ENCODE measurements at regions of chr9 and their contacts with region 1.

Region 1: GRCh38 chr9:87862536-87863268 is 20.0 kb upstream of the SPATA31E1 start:
- DNase-seq: no peak
- ATAC-seq: no peak
- H3K4me3 ChIP-seq: no peak overlapping the region
- H3K27ac ChIP-seq: no peak overlapping the region
- H3K4me1 ChIP-seq: no peaks in the 10 kb centered on the region
- H3K27me3 ChIP-seq: no peaks in the 10 kb centered on the region
- CTCF ChIP-seq: no peak

Region 2: DNA sequence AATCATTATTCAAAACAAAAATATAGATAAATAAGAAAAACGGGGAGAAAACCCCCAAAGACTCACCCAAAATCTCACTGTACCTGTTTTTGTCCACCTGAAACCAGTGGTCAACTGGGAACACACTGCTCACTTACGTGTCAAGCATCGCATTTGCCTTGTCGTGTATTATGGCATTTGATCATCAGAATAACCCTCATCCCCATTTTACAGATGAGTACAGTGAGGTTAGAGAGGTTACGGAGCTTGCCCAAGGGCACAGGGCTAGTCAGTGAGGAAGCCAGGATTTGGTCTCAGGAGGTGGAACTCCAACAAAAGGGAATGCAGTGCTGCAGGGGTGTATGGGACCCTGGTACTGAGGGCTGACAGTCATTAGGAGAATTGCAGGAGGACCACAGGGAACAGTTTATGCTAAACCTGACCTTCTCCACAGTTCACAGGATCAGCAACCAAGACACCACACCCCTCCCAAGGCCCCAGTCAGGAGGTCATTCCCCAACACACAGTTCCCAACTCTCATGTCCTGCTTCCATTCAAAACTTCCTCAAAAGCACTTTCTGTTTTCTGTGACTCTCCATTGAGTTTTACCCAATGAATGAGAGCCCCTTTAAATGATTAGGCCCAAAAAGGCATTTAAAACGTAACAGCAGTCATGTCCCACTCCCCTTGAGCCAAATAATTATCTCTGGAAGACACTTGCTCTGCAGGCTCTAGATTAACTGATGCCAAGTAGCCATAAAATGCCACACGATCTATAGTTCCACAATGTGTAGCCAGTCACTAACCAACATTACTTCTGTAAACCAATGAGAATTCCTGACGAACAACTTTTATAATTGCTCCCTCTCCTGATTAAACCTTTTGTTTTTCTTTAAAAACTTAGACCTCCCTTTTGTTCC is 86.0 kb before region 1 on chr9:
- intact Hi-C with region 1: loop called in 1 of 2 experiments (anchors 5 kb)
- DNase-seq: no peak
- ATAC-seq: no peak
- H3K4me3 ChIP-seq: no peak overlapping the region
- H3K27ac ChIP-seq: no peak overlapping the region
- H3K4me1 ChIP-seq: no peaks in the 10 kb centered on the region
- H3K27me3 ChIP-seq: no peaks in the 10 kb centered on the region
- CTCF ChIP-seq: no peak

Region 3: GRCh38 chr9:87798261-87798833 is 64.4 kb before region 1 on chr9:
- intact Hi-C with region 1: no loop called
- DNase-seq: no peak
- ATAC-seq: no peak
- H3K4me3 ChIP-seq: no peak overlapping the region
- H3K27ac ChIP-seq: no peak overlapping the region
- H3K4me1 ChIP-seq: no peaks in the 10 kb centered on the region
- H3K27me3 ChIP-seq: peaks cover 0 to 1% (median 0%) of the 10 kb centered on the region in 3 donors
- CTCF ChIP-seq: no peak

Region 4: DNA sequence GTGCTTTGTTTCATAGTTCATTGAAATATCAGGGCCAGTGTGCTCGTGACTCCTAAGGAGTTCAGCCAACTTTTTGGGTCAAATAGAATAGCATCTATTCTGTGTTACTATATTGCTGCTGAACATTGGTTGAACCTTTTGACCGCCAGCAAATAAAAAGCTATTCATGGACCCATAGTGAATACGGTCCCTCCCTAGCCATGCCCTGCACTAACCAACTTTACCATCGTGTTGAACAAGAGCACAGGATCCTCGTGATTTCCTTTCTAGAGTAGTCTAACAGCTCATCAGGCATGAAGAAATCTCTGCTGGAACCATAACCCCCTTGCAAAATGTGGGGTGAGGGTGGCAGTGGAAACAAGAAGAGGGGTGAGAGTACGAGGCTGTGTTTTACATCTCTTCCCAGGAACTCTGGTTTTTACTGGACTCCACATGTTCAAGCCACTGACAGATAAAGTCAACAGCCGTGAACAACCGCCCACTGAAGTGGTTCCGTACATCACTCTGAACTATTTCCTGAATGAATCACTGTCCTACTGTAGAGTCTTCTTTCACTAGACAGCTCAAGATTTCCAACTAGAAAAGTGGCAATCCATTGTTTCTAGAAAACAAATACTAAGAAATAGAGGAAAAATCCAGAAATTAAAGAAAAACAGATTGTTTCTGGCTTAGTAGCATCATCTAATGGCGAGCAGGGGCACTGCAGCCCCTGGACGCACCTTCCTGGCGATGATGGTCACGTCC is 50.2 kb before region 1 on chr9:
- intact Hi-C with region 1: no loop called
- DNase-seq: no peak
- ATAC-seq: peak in 1 of 4 donors; percentile 32
- H3K4me3 ChIP-seq: no peak overlapping the region
- H3K27ac ChIP-seq: no peak overlapping the region
- H3K4me1 ChIP-seq: no peaks in the 10 kb centered on the region
- H3K27me3 ChIP-seq: peaks cover 0 to 12% (median 4%) of the 10 kb centered on the region in 3 donors
- CTCF ChIP-seq: peak; percentile 75

Region 5: DNA sequence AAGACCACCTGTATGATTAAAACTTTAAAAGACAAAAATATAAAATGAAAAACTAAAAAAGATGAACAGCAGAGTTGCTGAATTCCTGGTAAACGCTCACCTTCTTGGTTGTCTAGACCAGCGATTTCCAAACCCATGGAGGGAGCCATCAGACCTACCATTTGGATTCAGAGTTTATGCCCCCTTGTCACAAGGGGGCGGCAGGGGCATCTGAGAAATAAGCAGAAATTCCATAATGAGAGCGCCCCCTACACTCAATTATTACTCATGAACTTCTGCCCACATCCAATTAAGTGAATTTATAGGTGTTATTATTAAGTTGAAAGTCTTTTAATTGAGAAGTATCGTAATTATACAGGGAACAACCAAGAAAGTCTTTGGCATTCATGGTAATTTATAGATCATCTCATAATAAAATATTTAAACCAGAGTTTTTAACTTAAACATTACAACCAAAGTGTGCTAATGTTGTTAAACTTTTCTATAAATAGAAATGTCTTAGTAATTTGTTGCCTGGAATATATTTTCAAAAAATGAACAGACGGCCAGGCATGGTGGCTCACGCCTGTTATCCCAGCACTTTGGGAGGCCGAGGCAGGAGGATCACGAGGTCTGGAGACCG is 310.8 kb after region 1 on chr9:
- intact Hi-C with region 1: no loop called
- DNase-seq: no peak
- ATAC-seq: no peak
- H3K4me3 ChIP-seq: no peak overlapping the region
- H3K27ac ChIP-seq: no peak overlapping the region
- H3K4me1 ChIP-seq: no peaks in the 10 kb centered on the region
- H3K27me3 ChIP-seq: no peaks in the 10 kb centered on the region
- CTCF ChIP-seq: peak; percentile 11

Region 6: DNA sequence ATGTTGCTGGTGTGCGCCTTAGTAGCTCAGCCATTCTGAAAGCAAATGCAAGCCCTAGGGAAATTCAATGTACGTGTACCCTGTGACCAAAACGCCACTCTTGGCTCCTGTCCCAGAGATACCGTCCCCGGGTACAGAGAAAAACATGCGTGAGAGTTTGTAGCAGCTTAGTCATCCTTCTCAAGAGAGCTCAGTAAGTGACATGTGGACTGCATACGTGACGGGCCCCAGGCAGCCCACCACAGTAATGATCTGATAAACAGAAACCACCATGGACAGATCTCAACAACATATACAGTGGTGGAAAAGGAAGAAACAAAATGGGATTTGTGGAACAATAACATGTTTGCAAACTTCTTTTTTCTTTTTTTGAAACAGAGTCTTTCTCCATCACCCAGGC is 1173.7 kb after region 1 on chr9:
- intact Hi-C with region 1: no loop called
- DNase-seq: no peak
- ATAC-seq: no peak
- H3K4me3 ChIP-seq: no peak overlapping the region
- H3K27ac ChIP-seq: no peak overlapping the region
- H3K4me1 ChIP-seq: no peaks in the 10 kb centered on the region
- H3K27me3 ChIP-seq: no peaks in the 10 kb centered on the region
- CTCF ChIP-seq: no peak